Adrenal gland (tissue), 19 donors: ENCODE measurements at regions of chr1 and their contacts with region 1.

Region 1: GRCh38 chr1:119475866-119476439 is 31.1 kb upstream of the HSD3B1 start:
- DNase-seq: peak; percentile 58 to 79 (median 65)
- H3K4me3 ChIP-seq: no peak overlapping the region
- H3K27ac ChIP-seq: no peak overlapping the region
- H3K4me1 ChIP-seq: peaks cover 0 to 5% of the 10 kb centered on the region in 2 donors
- H3K27me3 ChIP-seq: no peaks in the 10 kb centered on the region
- CTCF ChIP-seq: peak; percentile 40 to 73 (median 62)
- POLR2A ChIP-seq: no peak

Region 2: DNA sequence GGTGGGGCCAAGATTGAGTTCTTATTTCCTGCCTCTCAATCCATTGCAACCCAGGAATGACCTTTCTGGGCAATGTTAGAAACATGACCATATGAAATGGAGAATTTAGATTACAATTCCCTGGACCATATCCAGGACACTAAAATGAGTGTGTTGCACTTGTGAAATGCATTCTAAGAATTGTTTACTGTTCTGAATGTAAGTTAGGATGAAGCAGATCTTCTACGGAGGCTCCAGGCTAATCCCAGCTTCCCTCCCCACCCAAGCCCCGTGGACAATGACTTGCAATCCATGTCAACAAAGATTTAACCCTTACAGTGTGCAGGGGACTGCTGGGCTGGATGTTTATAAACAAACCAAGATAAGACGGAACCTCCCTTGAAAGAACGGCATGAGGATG is 139.1 kb before region 1 on chr1:
- intact Hi-C with region 1: no loop called
- DNase-seq: no peak
- H3K4me3 ChIP-seq: no peak overlapping the region
- H3K27ac ChIP-seq: no peak overlapping the region
- H3K4me1 ChIP-seq: no peaks in the 10 kb centered on the region
- H3K27me3 ChIP-seq: no peaks in the 10 kb centered on the region
- CTCF ChIP-seq: no peak
- POLR2A ChIP-seq: no peak

Region 3: DNA sequence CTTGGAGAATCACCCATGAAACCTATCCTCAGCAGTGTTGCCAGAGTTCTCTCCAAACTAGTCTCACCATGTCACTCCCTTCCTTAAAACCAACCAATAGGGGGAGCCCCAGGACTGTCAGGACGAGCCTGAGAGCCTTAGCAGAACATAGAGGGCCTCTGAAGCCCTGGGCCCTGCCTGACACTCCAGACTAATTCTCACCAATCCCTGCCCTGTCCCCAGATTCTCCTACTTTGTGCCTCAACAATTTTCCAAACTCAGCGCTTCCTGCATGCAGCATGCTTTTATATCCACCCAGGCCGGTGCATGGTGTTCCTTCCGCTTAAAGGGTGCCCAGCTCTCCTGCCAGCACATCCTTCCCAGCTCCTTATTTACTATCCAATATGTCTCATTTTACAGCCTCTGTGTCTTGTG is 73.8 kb after region 1 on chr1:
- intact Hi-C with region 1: loop called in 1 of 2 experiments (anchors 10 kb)
- DNase-seq: peak; percentile 59 to 76 (median 72)
- H3K4me3 ChIP-seq: no peak overlapping the region
- H3K27ac ChIP-seq: no peak overlapping the region
- H3K4me1 ChIP-seq: peaks cover 0 to 11% of the 10 kb centered on the region in 2 donors
- H3K27me3 ChIP-seq: no peaks in the 10 kb centered on the region
- CTCF ChIP-seq: peak; percentile 28 to 56 (median 47)
- POLR2A ChIP-seq: no peak